ENCODE measurements at regions of chr19 and their contacts with region 1.

Region 1: GRCh38 chr19:19475849-19476828 is 39.2 kb downstream of the TSSK6 start:
- DNase-seq: peak; percentile 53
- ATAC-seq: peak; percentile 52
- H3K4me3 Mint-ChIP-seq: peak overlapping the region; percentile 56
- H3K27ac Mint-ChIP-seq: peak overlapping the region; percentile 91
- H3K4me1 Mint-ChIP-seq: peaks cover 60% of the 10 kb centered on the region
- H3K27me3 Mint-ChIP-seq: no peaks in the 10 kb centered on the region
- CTCF ChIP-seq: no peak

Region 2: GRCh38 chr19:19361075-19361594 is 115.0 kb before region 1 on chr19:
- CTCF ChIA-PET with region 1: interaction called, 24 read pairs
- POLR2A ChIA-PET with region 1: no interaction called
- DNase-seq: peak; percentile 87
- ATAC-seq: peak; percentile 88
- H3K4me3 Mint-ChIP-seq: no peak overlapping the region
- H3K27ac Mint-ChIP-seq: no peak overlapping the region
- H3K4me1 Mint-ChIP-seq: peaks cover 6% of the 10 kb centered on the region
- H3K27me3 Mint-ChIP-seq: no peaks in the 10 kb centered on the region
- CTCF ChIP-seq: peak; percentile 74

Region 3: DNA sequence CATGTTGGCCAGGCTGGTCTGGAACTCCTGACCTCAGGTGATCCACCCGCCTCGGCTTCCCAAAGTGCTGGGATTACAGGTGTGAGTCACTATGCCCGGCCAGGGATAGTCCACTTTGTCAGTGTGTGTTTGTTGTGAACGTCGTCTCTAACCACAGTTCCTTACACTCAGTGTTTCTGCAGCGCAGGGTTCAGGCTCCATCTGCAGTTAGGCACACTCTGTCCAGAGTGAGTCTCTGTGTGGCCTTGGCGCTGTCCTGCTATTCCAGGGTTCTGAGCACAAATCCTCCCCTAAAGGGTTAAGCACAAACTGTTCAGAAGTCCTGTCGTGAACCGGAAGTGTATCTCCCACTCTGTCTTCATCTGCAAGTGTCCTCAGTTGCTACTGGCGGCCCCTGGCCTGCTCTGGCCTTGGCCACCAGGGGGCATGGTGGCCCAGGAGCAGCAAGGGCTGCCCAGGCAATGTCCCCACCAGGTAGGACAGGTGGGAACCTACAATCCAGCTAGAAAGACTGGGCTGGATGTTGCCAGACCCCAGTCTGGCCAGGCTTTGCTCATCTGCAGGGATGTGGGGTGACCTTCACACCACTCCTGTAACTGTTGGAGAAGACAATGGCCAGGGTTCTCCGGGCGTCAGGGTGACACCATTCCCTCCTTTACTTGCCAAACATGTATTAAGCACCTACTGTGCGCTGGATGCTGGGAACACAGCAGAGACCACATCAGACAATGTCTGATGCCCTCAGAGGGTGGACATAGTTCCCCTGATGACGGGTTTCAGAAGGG is 109.3 kb before region 1 on chr19:
- CTCF ChIA-PET with region 1: interaction called, 24 read pairs
- POLR2A ChIA-PET with region 1: no interaction called
- DNase-seq: peak; percentile 85
- ATAC-seq: peak; percentile 97
- H3K4me3 Mint-ChIP-seq: peak overlapping the region; percentile 8; the same call in 1 of the 2 replicates
- H3K27ac Mint-ChIP-seq: peak overlapping the region; percentile 71
- H3K4me1 Mint-ChIP-seq: peaks cover 15% of the 10 kb centered on the region
- H3K27me3 Mint-ChIP-seq: no peaks in the 10 kb centered on the region
- CTCF ChIP-seq: peak; percentile 83

Region 4: GRCh38 chr19:19385108-19385899 is 90.8 kb before region 1 on chr19:
- CTCF ChIA-PET with region 1: interaction called, 10 read pairs
- POLR2A ChIA-PET with region 1: no interaction called
- DNase-seq: peak; percentile 100
- ATAC-seq: peak; percentile 97
- H3K4me3 Mint-ChIP-seq: peak overlapping the region; percentile 70
- H3K27ac Mint-ChIP-seq: peak overlapping the region; percentile 84
- H3K4me1 Mint-ChIP-seq: peaks cover 37% of the 10 kb centered on the region
- H3K27me3 Mint-ChIP-seq: peaks cover 9% of the 10 kb centered on the region
- CTCF ChIP-seq: no peak

Region 5: GRCh38 chr19:19404879-19405860 is 71.0 kb before region 1 on chr19 and contains the start of gene GATAD2A:
- CTCF ChIA-PET with region 1: interaction called, 14 read pairs
- POLR2A ChIA-PET with region 1: interaction called, 7 read pairs
- DNase-seq: peak; percentile 90
- ATAC-seq: peak; percentile 81
- H3K4me3 Mint-ChIP-seq: peak within 1 kb of the TSS; percentile 96
- H3K27ac Mint-ChIP-seq: peak within 1 kb of the TSS; percentile 96
- H3K4me1 Mint-ChIP-seq: peaks cover 48% of the 10 kb centered on the region
- H3K27me3 Mint-ChIP-seq: peaks cover 7% of the 10 kb centered on the region; the same call in 1 of the 2 replicates
- CTCF ChIP-seq: no peak
- total RNA-seq, gene GATAD2A: 186 to 209 TPM (median 189 TPM) in 3 replicates

Region 6: GRCh38 chr19:19459707-19460251 is 16.4 kb before region 1 on chr19:
- CTCF ChIA-PET with region 1: interaction called, 16 read pairs
- POLR2A ChIA-PET with region 1: interaction called, 3 read pairs
- DNase-seq: no peak
- ATAC-seq: no peak
- H3K4me3 Mint-ChIP-seq: no peak overlapping the region
- H3K27ac Mint-ChIP-seq: peak overlapping the region; percentile 71
- H3K4me1 Mint-ChIP-seq: peaks cover 70% of the 10 kb centered on the region
- H3K27me3 Mint-ChIP-seq: no peaks in the 10 kb centered on the region
- CTCF ChIP-seq: no peak